CD4-positive, alpha-beta T cell (primary cell): ENCODE measurements at regions of chr18 and their contacts with region 1.

Region 1: GRCh38 chr18:54828281-54828881 is at the start of gene RAB27B:
- DNase-seq: peak; percentile 38 to 79 (median 65)
- ATAC-seq: peak; percentile 97
- H3K4me3 ChIP-seq: peak within 1 kb of the TSS; percentile 74
- H3K4me3 Mint-ChIP-seq: peak within 1 kb of the TSS; percentile 95
- H3K27ac ChIP-seq: no peak within 1 kb of the TSS
- H3K27ac Mint-ChIP-seq: peak within 1 kb of the TSS; percentile 84
- H3K4me1 ChIP-seq: peaks cover 9% of the 10 kb centered on the region
- H3K4me1 Mint-ChIP-seq: peaks cover 38% of the 10 kb centered on the region
- H3K27me3 ChIP-seq: peaks cover 0 to 3% of the 10 kb centered on the region in 2 experiments
- H3K27me3 Mint-ChIP-seq: no peaks in the 10 kb centered on the region
- CTCF ChIP-seq: no peak
- total RNA-seq, gene RAB27B: 2.4 to 2.5 TPM

Region 2: DNA sequence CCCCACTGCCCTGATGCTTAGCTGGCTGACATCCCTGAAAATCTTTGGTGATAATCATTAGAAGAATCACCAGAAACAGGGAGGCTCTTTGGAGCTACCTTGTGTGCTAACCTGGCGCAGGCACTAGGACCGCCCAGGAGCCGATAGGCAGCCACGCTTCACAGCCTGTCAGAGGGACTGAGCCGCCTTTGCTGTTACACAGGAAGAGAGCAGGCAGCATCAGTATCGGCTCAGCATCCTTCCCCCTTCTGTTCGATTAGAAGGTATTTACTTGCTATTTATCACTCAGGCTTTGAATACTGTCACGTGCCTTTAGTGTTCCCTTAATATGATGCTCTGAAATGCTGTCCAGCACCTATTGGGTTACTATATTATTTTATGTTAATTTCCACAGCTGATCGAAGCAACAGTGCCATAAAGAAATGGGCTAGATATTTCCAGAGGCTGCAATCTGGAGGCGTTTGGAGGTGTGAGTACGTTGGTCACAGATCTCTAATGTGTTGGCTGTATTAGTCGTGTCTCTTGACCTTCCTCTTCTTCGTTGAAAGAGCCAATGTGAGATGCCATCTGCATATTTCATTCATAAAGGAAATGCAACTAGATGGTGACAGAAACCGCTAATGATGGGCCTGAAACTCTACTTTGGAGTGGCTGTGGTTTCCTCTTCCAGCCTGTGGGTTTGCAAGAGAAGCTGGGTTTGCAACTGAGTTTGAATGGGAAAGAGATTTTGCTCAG is 110.5 kb before region 1 on chr18:
- CTCF ChIA-PET with region 1: no interaction called
- POLR2A ChIA-PET with region 1: interaction called, 5 read pairs
- intact Hi-C with region 1: loop called in 1 of 2 experiments (anchors 5 kb)
- DNase-seq: peak; percentile 7 to 72 (median 29)
- ATAC-seq: peak; percentile 91
- H3K4me3 ChIP-seq: peak overlapping the region; percentile 36
- H3K4me3 Mint-ChIP-seq: peak overlapping the region; percentile 85
- H3K27ac ChIP-seq: no peak overlapping the region
- H3K27ac Mint-ChIP-seq: peak overlapping the region; percentile 62
- H3K4me1 ChIP-seq: peaks cover 17% of the 10 kb centered on the region
- H3K4me1 Mint-ChIP-seq: peaks cover 47% of the 10 kb centered on the region
- H3K27me3 ChIP-seq: no peaks in the 10 kb centered on the region
- H3K27me3 Mint-ChIP-seq: no peaks in the 10 kb centered on the region
- CTCF ChIP-seq: no peak